Sciatic nerve (tissue), 2 donors: ENCODE measurements at regions of chr1 and their contacts with region 1.

Region 1: DNA sequence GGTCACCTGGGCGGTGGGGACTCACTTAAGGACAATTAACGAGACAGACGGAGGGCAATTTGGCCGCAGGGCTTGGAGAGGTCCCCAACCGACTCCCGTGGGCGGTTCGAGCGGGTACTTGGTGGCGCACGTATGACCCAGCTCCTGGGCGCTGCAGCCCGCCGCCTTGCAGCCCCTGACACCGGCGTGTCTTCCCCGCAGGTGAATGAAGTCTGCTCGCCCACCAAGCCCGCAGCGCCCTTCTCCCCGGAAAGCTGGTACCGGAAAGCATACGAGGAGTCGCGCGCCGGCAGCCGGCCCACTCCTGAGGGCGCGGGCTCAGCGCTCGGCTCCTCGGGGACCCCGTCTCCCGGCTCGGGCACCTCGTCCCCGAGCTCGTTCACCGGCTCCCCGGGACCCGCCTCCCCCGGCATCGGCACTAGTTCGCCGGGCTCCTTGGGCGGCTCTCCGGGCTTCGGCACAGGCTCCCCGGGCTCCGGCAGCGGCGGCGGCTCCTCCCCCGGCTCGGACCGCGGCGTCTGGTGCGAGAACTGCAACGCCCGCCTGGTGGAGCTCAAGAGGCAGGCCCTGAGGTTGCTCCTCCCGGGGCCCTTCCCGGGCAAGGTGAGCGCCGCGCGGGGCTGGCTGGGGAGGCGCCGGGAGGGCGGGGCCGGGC is 1.4 kb downstream of the KIF26B start:
- DNase-seq: peak; percentile 85
- ATAC-seq: peak; percentile 70

Region 2: GRCh38 chr1:244231572-244232315 is 924.5 kb before region 1 on chr1:
- intact Hi-C with region 1: no loop called
- DNase-seq: no peak
- ATAC-seq: no peak

Region 3: GRCh38 chr1:246002725-246003441 is 846.7 kb after region 1 on chr1:
- intact Hi-C with region 1: loop called (anchors 10 kb)
- DNase-seq: peak; percentile 92
- ATAC-seq: peak; percentile 71